HepG2 (cell line): ENCODE measurements at regions of chrX and their contacts with region 1.

Region 1: DNA sequence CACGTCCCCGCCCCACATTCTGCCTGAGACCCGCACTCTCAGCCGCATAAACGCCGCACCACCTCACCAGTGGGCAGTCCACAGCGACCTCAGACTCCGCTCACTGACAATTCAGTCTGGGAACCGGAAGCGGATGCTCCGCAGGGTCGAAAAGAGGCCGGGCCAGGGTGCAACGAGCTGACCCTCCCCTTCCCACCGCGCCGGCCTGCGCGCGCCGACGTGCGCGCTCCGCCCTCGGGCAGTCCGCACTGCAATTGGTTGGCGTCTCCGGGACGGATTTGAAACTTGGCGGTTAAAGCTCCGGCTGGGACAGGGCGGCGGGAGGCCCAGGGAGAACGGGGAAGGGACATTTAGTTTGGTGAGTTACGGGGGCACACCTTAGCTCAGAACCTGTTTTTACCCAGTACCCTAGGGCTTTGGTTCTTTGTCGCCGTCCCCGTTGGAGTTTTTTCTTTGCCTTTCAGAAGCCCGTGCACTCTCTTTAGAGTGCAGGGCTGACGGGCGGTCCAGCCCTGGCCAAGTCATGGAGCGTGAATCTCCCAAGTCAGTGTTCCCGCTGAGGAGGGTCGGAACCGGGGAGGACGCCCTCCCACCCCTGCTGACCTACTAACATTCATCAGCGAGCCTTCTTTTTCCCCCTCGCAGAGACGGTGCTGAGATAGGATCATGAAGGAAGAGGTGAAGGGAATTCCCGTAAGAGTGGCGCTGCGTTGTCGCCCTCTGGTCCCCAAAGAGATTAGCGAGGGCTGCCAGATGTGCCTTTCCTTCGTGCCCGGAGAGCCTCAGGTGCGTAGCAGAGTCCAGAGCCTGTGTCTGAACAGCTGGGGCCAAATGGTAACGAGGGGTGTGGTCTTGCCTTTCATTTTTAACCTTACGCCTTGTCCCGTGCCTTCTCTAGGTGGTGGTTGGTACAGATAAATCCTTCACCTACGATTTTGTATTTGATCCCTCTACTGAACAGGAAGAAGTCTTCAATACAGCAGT is at the starts of genes KIF4A and PDZD11:
- DNase-seq: peak; percentile 72
- ATAC-seq: peak; percentile 99
- H3K4me3 ChIP-seq: peak within 1 kb of the TSS; percentile 68 to 83 (median 82)
- H3K27ac ChIP-seq: peak within 1 kb of the TSS; percentile 80
- H3K4me1 ChIP-seq: peaks cover 23% of the 10 kb centered on the region
- H3K27me3 ChIP-seq: no peaks in the 10 kb centered on the region; a peak in 1 of 5 replicates
- CTCF ChIP-seq: 0 out of 2 replicates have a peak, but pooled peaks have one; percentile 8
- EP300 ChIP-seq: no peak
- POLR2A ChIP-seq: peak; percentile 71 to 89; a peak in 3 of 4 replicates
- RAD21 ChIP-seq: no peak
- total RNA-seq, gene KIF4A: 28.2 and 42.2 TPM in 2 replicates
- total RNA-seq, gene PDZD11: 29.1 and 42.0 TPM in 2 replicates

Region 2: DNA sequence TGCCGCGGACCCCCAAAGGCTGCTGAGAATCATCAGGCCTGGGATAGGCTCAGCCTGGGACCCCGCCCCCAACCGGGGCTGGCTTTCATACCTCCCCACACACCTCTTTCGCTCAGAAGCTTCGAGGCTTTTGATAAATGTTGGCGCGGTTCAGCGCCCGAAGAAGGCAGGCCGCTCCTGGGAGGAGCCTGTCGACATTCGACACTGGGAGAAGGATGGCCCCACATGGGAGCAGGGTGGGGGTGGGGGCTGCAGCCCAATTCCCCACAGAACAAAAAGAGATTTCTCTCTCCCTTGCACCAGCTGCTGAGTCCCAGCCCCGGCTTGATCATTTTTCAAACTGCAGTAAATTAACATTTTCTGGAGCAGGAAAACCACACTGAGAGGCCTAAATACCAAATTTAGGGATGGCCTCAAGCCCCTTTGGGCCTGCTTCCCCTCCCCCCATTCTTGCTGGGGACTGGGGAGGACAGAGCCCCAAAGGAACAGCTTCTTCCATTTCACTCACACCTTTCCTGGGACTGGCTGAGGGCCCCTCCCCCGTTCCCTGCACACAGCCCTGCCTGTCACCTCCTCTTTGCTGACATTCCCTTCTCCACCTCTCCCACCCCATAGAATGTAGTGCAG is 1011.9 kb before region 1 on chrX:
- CTCF ChIA-PET with region 1: no interaction called
- POLR2A ChIA-PET with region 1: no interaction called
- in situ Hi-C with region 1: no loop called
- intact Hi-C with region 1: loop called (anchors 10 kb)
- DNase-seq: no peak
- ATAC-seq: no peak
- H3K4me3 ChIP-seq: no peak overlapping the region
- H3K27ac ChIP-seq: no peak overlapping the region
- H3K4me1 ChIP-seq: peaks cover 20% of the 10 kb centered on the region
- H3K27me3 ChIP-seq: no peaks in the 10 kb centered on the region
- CTCF ChIP-seq: no peak
- EP300 ChIP-seq: no peak
- POLR2A ChIP-seq: no peak
- RAD21 ChIP-seq: no peak

Region 3: GRCh38 chrX:70433848-70434351 is 143.8 kb after region 1 on chrX:
- CTCF ChIA-PET with region 1: no interaction called
- POLR2A ChIA-PET with region 1: no interaction called
- in situ Hi-C with region 1: no loop called
- intact Hi-C with region 1: loop called (anchors 5 kb)
- DNase-seq: peak; percentile 54
- ATAC-seq: peak; percentile 82
- H3K4me3 ChIP-seq: peak overlapping the region; percentile 71 to 80 (median 77)
- H3K27ac ChIP-seq: peak overlapping the region; percentile 74
- H3K4me1 ChIP-seq: peaks cover 22% of the 10 kb centered on the region
- H3K27me3 ChIP-seq: no peaks in the 10 kb centered on the region
- CTCF ChIP-seq: peak; percentile 92
- EP300 ChIP-seq: no peak
- POLR2A ChIP-seq: peak in 1 of 2 experiments; percentile 15; a peak in 1 of 4 replicates
- RAD21 ChIP-seq: peak; percentile 70